Panc1 (cell line): ENCODE measurements at regions of chr7 and their contacts with region 1.

Region 1: DNA sequence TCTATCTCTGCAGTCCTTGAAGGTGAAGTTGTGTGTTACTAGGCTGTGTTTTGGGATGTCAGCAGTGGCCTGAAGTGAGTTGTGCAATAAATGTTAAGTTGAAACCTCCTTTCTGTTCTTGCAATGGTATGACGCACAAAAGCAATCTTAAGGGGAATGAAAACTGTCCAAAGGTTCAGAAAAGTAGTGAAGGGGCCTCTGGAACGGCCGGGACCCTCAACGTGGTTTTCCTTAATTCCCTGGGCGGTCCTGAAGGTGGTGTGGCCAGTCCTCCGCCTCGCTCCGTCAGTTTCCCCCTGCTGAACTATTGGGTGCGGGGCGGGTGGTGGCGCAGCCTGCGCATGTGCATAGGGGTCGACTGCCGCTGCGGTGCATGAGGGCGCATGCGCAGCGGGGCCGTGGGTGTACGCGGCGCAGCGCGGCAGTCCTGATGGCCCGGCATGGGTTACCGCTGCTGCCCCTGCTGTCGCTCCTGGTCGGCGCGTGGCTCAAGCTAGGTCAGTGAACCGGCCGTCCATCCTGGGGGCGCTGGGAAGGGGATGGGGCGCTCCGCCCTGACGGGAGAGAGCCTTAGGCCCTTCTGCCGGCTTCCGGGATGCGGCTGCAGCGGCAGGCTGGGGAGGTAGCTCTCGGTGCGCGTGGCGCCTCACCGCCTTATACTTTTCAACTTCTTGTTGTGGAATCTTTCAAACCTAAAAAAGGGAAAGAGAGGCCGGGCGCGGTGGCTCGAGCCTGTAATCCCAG is at the start of gene SUMF2:
- DNase-seq: peak; percentile 86
- ATAC-seq: peak; percentile 93
- H3K4me3 ChIP-seq: peak within 1 kb of the TSS; percentile 62 to 78
- H3K27ac ChIP-seq: peak within 1 kb of the TSS; percentile 95
- H3K4me1 ChIP-seq: peaks cover 52% of the 10 kb centered on the region
- H3K27me3 ChIP-seq: no peaks in the 10 kb centered on the region
- CTCF ChIP-seq: no peak
- total RNA-seq, gene SUMF2: 156 TPM

Region 2: GRCh38 chr7:56051339-56052191 is 12.5 kb before region 1 on chr7 and contains the starts of genes CCT6A and PSPH:
- CTCF ChIA-PET with region 1: no interaction called
- POLR2A ChIA-PET with region 1: interaction called, 13 read pairs
- in situ Hi-C with region 1: no loop called
- intact Hi-C with region 1: no loop called
- DNase-seq: peak; percentile 91
- ATAC-seq: peak; percentile 97
- H3K4me3 ChIP-seq: peak within 1 kb of the TSS; percentile 93 to 95
- H3K27ac ChIP-seq: peak within 1 kb of the TSS; percentile 99
- H3K4me1 ChIP-seq: peaks cover 45% of the 10 kb centered on the region
- H3K27me3 ChIP-seq: no peaks in the 10 kb centered on the region
- CTCF ChIP-seq: no peak
- total RNA-seq, gene CCT6A: 324 TPM
- total RNA-seq, gene PSPH: 62.3 TPM